ENCODE measurements at regions of chr1 and their contacts with region 1.

Region 1: DNA sequence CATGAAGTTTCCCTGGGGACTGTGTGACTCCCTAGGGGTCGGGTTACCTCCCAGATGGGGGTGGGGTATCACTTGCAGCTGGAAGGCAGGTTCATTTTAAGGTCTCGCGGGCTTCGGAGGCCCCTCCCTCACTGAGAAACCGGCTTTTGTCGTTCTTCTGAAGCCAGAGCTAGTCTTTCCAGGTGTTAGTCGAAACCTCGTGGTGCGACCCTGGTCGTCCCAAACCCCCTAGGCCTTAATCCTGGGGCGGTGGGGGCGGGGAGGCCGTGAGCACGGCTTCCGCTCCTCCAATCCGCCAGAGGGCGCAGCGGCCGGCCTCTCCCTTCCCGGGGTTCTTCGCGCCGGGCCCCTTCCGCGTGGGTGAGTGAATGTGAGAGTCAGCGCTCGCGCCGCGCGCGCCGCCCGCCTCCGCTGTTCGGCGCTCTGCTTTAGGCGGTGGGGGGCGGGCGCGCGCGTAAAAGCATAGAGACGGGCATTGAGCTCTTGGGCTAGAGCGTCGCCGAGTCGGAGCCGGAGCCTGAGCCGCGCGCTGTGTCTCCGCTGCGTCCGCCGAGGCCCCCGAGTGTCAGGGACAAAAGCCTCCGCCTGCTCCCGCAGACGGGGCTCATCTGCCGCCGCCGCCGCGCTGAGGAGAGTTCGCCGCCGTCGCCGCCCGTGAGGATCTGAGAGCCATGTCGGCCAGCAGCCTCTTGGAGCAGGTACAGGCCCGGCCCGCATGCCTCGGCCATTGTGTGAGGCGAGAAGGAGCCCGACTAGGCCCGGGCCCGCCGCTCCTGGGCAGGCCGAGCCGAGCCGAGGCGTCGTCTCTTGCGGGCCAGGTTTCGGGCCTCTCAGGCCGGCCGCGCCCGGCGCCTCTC is at the start of gene YTHDF2:
- DNase-seq: peak; percentile 82
- H3K4me3 ChIP-seq: peak within 1 kb of the TSS; percentile 77
- H3K27ac ChIP-seq: peak within 1 kb of the TSS; percentile 87
- H3K27me3 ChIP-seq: no peaks in the 10 kb centered on the region
- CTCF ChIP-seq: peak; percentile 89
- polyA plus RNA-seq, gene YTHDF2: 73.6 and 85.1 TPM in 2 replicates

Region 2: GRCh38 chr1:28571911-28572310 is 164.8 kb before region 1 on chr1:
- CTCF ChIA-PET with region 1: no interaction called
- POLR2A ChIA-PET with region 1: no interaction called
- DNase-seq: no peak
- H3K4me3 ChIP-seq: no peak overlapping the region
- H3K27ac ChIP-seq: no peak overlapping the region
- H3K27me3 ChIP-seq: no peaks in the 10 kb centered on the region
- CTCF ChIP-seq: no peak

Region 3: GRCh38 chr1:28642847-28643635 is 93.6 kb before region 1 on chr1 and contains the start of gene TAF12:
- CTCF ChIA-PET with region 1: interaction called, 9 read pairs
- POLR2A ChIA-PET with region 1: interaction called, 39 read pairs
- DNase-seq: peak; percentile 86
- H3K4me3 ChIP-seq: peak within 1 kb of the TSS; percentile 98
- H3K27ac ChIP-seq: peak within 1 kb of the TSS; percentile 89
- H3K27me3 ChIP-seq: no peaks in the 10 kb centered on the region
- CTCF ChIP-seq: peak; percentile 30; the same call in 1 of the 2 replicates
- polyA plus RNA-seq, gene TAF12: 50.2 and 54.2 TPM in 2 replicates

Region 4: DNA sequence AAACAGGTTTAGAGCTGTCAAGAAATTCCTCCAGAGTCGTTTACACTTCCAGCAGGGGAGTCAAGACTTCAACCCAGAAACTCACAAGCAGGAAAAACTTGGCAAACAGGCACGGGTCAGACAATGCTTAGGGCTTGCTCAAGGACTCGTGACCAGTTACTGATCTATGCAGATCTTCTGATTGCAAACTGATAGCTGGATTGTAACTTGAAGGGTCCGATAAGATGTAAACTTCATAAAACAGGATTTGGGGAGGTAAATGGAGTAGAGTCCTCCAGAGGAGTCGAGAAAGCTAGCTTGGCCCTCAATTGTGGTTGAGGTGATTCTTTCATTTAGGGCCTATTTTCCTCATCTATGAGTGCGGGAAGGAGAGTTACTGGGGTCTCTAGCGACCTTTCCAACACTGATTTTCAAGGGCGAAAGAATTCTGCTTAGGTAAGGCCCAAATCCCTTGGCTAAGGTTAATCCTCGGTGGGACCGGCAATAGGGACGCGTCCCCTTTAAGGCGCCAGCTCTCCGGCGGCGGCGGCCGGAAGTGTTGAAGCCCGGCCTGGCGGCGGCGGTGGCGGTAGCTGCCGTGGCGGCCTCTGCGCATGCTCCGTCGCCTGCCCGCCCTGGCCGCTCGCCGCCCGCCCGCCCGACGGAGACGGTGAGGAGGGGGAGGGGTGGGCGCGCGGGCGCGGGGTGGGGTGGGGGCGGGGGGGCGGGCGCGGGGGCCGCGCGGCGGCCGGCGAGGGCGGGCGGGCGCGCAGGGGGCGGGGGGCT is 68.3 kb before region 1 on chr1 and contains the start of gene GMEB1:
- CTCF ChIA-PET with region 1: interaction called, 20 read pairs
- POLR2A ChIA-PET with region 1: interaction called, 22 read pairs
- DNase-seq: no peak
- H3K4me3 ChIP-seq: peak within 1 kb of the TSS; percentile 75
- H3K27ac ChIP-seq: peak within 1 kb of the TSS; percentile 93
- H3K27me3 ChIP-seq: no peaks in the 10 kb centered on the region
- CTCF ChIP-seq: no peak
- polyA plus RNA-seq, gene GMEB1: 6.2 and 6.5 TPM in 2 replicates

Region 5: GRCh38 chr1:28718586-28719331 is 17.9 kb before region 1 on chr1:
- CTCF ChIA-PET with region 1: interaction called, 41 read pairs
- POLR2A ChIA-PET with region 1: interaction called, 11 read pairs
- DNase-seq: peak; percentile 18
- H3K4me3 ChIP-seq: no peak overlapping the region
- H3K27ac ChIP-seq: peak overlapping the region; percentile 35
- H3K27me3 ChIP-seq: no peaks in the 10 kb centered on the region
- CTCF ChIP-seq: no peak

Region 6: GRCh38 chr1:28756846-28757245 is 20.2 kb after region 1 on chr1:
- CTCF ChIA-PET with region 1: interaction called, 45 read pairs
- POLR2A ChIA-PET with region 1: interaction called, 15 read pairs
- DNase-seq: no peak
- H3K4me3 ChIP-seq: no peak overlapping the region
- H3K27ac ChIP-seq: no peak overlapping the region
- H3K27me3 ChIP-seq: no peaks in the 10 kb centered on the region
- CTCF ChIP-seq: peak; percentile 13; the same call in 1 of the 2 replicates

Region 7: DNA sequence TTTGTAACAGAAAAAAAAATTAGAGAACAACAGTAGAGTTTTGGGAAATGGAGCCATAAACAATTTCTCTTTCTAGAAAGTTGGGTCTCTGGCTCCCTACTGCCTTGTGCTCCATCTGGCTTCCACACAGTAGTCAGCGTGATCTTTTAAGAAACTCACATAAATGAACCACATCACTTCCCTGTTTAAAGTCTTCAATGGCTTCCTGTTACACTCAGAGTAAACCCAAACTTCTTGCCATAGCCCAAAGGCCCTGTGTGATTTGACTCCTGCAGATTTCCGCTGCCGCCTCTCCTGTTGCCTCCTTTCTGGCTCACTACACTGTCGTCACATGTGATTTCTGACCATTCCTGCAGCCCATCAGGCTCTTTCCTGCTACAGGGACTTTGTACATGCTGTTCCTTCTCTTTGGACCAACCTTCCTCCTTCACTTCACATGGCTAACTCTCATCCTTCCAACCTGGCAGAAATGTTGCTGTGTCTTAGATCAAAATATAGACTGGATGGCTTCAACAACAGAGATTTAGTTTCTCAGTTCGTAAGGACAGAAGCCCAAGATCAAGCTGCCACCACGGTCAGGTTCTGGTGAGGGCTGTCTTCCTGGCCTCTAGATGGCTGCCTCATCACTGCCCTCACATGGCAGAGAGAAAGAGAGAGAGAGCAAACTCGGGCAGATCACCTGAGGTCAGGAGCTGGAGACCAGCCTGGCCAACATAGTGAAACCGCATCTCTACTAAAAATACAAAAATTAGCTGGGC is 109.3 kb after region 1 on chr1:
- CTCF ChIA-PET with region 1: no interaction called
- POLR2A ChIA-PET with region 1: no interaction called
- DNase-seq: no peak
- H3K4me3 ChIP-seq: no peak overlapping the region
- H3K27ac ChIP-seq: no peak overlapping the region
- H3K27me3 ChIP-seq: peaks cover 5% of the 10 kb centered on the region
- CTCF ChIP-seq: peak; percentile 29; the same call in 1 of the 2 replicates

Region 8: DNA sequence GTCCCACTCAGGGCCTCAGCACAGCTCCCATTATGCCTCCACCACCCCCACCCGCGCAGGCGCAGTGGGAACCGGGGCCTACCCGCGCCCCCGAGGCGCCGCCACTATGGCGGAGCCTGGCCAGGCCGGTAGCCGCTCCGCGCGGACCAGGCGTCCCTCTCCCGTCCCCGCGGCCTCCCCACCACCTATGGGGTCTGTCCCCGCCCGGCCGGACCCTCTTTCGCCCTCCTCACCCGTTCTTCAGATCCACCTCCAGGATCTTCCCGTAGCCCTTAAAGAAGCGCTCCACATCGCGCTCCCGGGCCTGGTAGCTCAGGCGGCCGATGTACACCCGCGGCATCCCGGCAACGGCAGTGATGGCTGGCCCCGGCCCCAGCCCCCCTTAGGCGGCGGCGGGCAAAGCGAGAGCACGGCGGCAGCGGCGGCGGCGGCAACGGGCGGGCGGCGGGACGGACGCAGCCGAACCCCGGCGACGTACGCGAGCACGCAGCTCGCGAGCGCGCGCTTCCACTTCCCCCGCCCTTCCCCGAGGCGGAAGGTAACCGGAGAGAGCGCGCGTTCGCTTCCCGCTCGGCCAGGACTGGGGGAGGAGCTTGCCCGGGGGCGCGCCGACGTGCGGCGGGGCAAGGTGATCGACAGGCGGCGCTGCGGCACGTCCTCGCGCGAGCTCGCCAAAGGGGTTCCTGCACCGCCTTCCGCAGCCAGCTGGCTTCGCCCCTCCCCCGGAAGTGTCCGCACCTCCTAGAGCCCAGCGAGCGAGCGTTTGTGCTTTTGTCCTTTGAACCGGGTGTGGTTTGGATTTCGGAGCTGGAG is 444.9 kb after region 1 on chr1 and contains the start of gene SRSF4:
- CTCF ChIA-PET with region 1: interaction called, 6 read pairs
- POLR2A ChIA-PET with region 1: interaction called, 17 read pairs
- DNase-seq: peak; percentile 97
- H3K4me3 ChIP-seq: peak within 1 kb of the TSS; percentile 89
- H3K27ac ChIP-seq: peak within 1 kb of the TSS; percentile 98
- H3K27me3 ChIP-seq: no peaks in the 10 kb centered on the region
- CTCF ChIP-seq: peak; percentile 57
- polyA plus RNA-seq, gene SRSF4: 39.7 and 45.6 TPM in 2 replicates

Region 9: GRCh38 chr1:29417147-29417858 is 680.6 kb after region 1 on chr1:
- CTCF ChIA-PET with region 1: no interaction called
- POLR2A ChIA-PET with region 1: no interaction called
- DNase-seq: no peak
- H3K4me3 ChIP-seq: no peak overlapping the region
- H3K27ac ChIP-seq: no peak overlapping the region
- H3K27me3 ChIP-seq: peaks cover 5% of the 10 kb centered on the region
- CTCF ChIP-seq: no peak